HCT116 (cell line): ENCODE measurements at regions of chr12 and their contacts with region 1.

Region 1: GRCh38 chr12:65306366-65307168 is 28.1 kb downstream of the MSRB3 start:
- DNase-seq: peak; percentile 91
- ATAC-seq: peak; percentile 88
- H3K4me3 ChIP-seq: peak overlapping the region; percentile 28 to 35
- H3K27ac ChIP-seq: peak overlapping the region; percentile 95
- H3K4me1 ChIP-seq: peaks cover 38 to 73% of the 10 kb centered on the region in 2 experiments
- H3K27me3 ChIP-seq: no peaks in the 10 kb centered on the region
- CTCF ChIP-seq: peak; percentile 78 to 91 (median 88)
- POLR2A ChIP-seq: peak; percentile 43
- RAD21 ChIP-seq: peak; percentile 97

Region 2: GRCh38 chr12:64900540-64900939 is 406.0 kb before region 1 on chr12:
- CTCF ChIA-PET with region 1: no interaction called
- POLR2A ChIA-PET with region 1: no interaction called
- RAD21 ChIA-PET with region 1: no interaction called
- intact Hi-C with region 1: no loop called
- DNase-seq: no peak
- ATAC-seq: no peak
- H3K4me3 ChIP-seq: no peak overlapping the region
- H3K27ac ChIP-seq: no peak overlapping the region
- H3K4me1 ChIP-seq: no peaks in the 10 kb centered on the region
- H3K27me3 ChIP-seq: no peaks in the 10 kb centered on the region
- CTCF ChIP-seq: no peak
- POLR2A ChIP-seq: no peak
- RAD21 ChIP-seq: no peak

Region 3: DNA sequence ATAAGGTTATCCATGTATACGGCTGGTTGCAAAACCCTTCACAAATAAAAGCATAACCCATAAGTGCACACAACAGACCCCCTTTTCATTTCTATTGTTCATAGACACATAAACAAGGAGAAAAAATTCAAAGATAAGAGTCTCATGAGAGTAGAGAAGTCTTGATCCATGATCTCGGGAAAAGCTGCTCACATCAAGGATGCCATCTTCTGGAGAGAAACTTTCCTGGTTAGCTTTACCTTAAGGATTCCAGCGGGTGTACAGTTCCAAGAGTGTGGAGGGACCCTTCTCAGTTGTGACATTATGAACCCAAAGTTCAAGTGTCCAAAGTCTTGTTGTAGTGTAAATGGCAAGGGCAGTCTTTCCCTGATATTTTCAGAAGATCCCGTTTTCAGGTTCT is 679.5 kb after region 1 on chr12:
- CTCF ChIA-PET with region 1: no interaction called
- POLR2A ChIA-PET with region 1: no interaction called
- RAD21 ChIA-PET with region 1: no interaction called
- intact Hi-C with region 1: loop called (anchors 1 kb)
- DNase-seq: no peak
- ATAC-seq: no peak
- H3K4me3 ChIP-seq: no peak overlapping the region
- H3K27ac ChIP-seq: no peak overlapping the region
- H3K4me1 ChIP-seq: no peaks in the 10 kb centered on the region
- H3K27me3 ChIP-seq: no peaks in the 10 kb centered on the region
- CTCF ChIP-seq: no peak
- POLR2A ChIP-seq: no peak
- RAD21 ChIP-seq: peak; percentile 32; the same call in 1 of the 2 replicates

Region 4: DNA sequence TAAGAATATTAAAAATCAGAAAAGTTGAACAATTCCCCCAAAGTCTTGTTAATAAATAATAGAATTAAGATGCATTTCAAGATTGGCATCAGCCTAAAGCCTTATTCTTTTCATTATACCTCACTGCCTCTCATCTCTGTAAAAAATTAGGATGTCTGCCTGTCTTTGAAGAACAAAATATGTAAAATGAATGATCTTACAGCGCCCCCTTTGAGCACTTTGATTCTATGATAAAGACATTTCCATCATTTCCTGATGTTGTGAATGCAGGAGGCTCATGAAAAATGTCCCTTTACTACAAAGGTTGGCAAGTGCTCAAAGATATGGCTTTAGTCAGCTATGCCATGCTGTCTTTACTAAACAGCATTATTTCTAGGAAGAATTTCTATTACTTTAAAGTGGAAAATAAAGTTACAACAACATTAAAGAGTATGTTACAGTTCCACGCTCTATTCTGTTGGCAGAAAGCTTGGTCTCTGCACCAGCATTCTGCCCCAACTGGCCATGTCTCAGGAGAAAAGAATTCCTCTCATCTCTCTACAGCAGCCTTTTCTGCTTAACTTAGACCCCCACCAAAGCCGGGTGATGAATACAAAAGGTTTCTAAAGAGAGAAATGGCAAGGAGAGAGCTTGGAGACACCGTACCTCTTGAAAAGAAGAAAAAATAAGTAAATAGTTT is 728.9 kb after region 1 on chr12:
- CTCF ChIA-PET with region 1: interaction called, 7 read pairs
- POLR2A ChIA-PET with region 1: no interaction called
- RAD21 ChIA-PET with region 1: no interaction called
- intact Hi-C with region 1: loop called (anchors 2 kb)
- DNase-seq: peak; percentile 68
- ATAC-seq: peak; percentile 62
- H3K4me3 ChIP-seq: peak overlapping the region in 1 of 2 experiments; percentile 2; a peak in 1 of 4 replicates
- H3K27ac ChIP-seq: peak overlapping the region; percentile 62; the same call in 1 of the 2 replicates
- H3K4me1 ChIP-seq: peaks cover 17 to 28% of the 10 kb centered on the region in 2 experiments
- H3K27me3 ChIP-seq: no peaks in the 10 kb centered on the region
- CTCF ChIP-seq: peak; percentile 57 to 77 (median 73)
- POLR2A ChIP-seq: no peak
- RAD21 ChIP-seq: peak; percentile 84

Region 5: DNA sequence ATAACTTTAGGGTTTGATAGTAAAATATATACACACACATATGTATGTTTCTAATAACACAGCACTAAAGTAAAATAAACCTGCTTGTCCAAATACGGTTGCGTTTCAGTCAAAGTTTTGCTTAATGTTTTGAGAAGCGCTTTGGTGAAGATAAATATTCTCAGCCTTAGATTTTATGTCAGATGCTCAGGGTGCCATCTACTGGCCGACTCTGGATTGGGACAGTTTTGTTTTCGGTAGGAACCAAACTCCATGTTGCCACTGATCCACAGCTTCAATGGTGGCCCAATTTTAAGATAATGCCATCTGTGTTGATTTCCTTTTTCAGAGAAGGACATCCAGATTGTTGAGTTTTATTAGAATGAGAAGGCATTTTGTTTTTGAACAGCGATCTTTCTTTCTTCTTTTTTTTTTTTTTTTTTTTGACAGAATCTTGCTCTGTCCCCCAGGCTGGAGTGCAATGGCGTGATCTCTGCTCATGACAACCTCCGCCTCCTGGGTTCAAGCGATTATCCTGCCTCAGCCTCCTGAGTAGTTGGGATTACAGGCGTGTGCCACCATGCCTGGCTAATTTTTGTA is 780.9 kb after region 1 on chr12:
- CTCF ChIA-PET with region 1: interaction called, 12 read pairs
- POLR2A ChIA-PET with region 1: no interaction called
- RAD21 ChIA-PET with region 1: interaction called in 1 of 2 experiments, 3 read pairs
- intact Hi-C with region 1: loop called (anchors 1 kb)
- DNase-seq: peak; percentile 68
- ATAC-seq: peak; percentile 91
- H3K4me3 ChIP-seq: no peak overlapping the region
- H3K27ac ChIP-seq: no peak overlapping the region
- H3K4me1 ChIP-seq: peaks cover 0 to 14% of the 10 kb centered on the region in 2 experiments; a peak in 1 of 4 replicates
- H3K27me3 ChIP-seq: no peaks in the 10 kb centered on the region
- CTCF ChIP-seq: peak; percentile 75 to 97 (median 90)
- POLR2A ChIP-seq: no peak
- RAD21 ChIP-seq: peak; percentile 95

Region 6: DNA sequence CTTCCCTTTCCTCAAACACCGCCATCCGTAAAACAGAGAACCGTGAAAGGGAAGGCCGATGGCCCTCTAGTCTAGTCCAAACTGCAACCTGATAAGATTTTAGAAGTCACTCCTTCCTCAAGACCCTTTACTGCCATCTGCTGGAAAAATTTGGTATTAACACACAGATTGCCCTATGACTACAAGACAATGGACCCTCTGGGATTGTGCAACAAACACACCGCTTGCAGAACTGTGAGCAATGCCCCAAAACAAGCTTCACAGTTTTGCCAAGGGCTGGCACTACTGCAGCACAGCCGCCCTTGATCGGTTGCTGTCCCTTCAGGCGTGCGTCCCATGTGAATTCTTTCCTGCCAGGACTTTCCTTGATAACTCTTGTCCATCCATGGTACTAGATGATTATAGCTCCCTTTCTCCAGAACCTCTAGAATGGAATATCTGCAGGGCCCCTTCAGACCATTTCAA is 800.9 kb after region 1 on chr12:
- CTCF ChIA-PET with region 1: interaction called, 4 read pairs
- POLR2A ChIA-PET with region 1: no interaction called
- RAD21 ChIA-PET with region 1: no interaction called
- intact Hi-C with region 1: loop called (anchors 5 kb)
- DNase-seq: peak; percentile 93
- ATAC-seq: peak; percentile 92
- H3K4me3 ChIP-seq: no peak overlapping the region
- H3K27ac ChIP-seq: peak overlapping the region; percentile 5; the same call in 1 of the 2 replicates
- H3K4me1 ChIP-seq: peaks cover 4 to 11% of the 10 kb centered on the region in 2 experiments; a peak in 3 of 4 replicates
- H3K27me3 ChIP-seq: no peaks in the 10 kb centered on the region
- CTCF ChIP-seq: peak; percentile 81 to 91 (median 83)
- POLR2A ChIP-seq: no peak
- RAD21 ChIP-seq: peak; percentile 90